Right cardiac atrium (tissue), 5 donors: ENCODE measurements at regions of chr5 and their contacts with region 1.

Region 1: DNA sequence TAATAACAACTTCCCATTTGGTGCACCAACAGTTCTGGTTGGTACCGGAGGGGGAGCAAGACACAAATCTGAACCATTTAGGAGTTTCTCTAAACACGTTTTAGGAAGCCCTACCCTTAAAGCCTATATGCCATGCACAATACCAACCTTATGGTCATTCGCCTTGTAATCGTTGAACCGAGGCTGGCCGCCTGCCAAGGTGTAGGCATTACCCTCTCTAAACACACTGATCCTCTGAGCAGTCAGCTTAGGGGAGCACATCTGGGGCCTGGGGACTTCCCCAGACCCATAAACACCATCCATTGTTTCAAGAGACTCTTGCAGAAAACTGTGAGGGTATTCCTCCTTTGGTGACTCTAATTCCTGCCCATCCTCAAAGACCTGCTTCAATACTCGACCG is 328 bp downstream of the GRXCR2 start:
- DNase-seq: peak in 2 of 3 donors; percentile 29 to 47
- ATAC-seq: no peak
- H3K4me3 ChIP-seq: no peak overlapping the region
- H3K27ac ChIP-seq: no peak overlapping the region
- H3K4me1 ChIP-seq: no peaks in the 10 kb centered on the region
- H3K27me3 ChIP-seq: no peaks in the 10 kb centered on the region

Region 2: DNA sequence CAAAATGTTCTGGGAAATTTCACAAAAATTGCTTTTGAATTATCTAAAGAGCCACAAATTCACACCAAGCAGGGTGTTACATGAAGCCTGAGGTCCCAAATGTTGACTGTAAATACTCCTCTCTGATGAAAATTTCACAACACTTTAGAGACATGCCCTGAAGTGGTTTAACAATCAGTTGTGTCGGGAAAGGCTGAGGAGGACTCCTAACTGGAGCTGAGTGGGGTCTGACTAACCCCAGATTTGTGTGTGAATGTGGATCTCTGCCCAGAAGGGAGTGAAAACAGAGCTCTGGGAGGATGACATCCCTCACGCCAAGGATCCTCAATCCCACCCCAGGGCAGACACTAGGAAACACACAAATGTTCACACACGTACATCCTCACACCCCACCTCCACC is 31.4 kb after region 1 on chr5:
- intact Hi-C with region 1: loop called in 1 of 4 experiments (anchors 2 kb)
- DNase-seq: no peak
- ATAC-seq: peak in 1 of 2 donors; percentile 34
- H3K4me3 ChIP-seq: no peak overlapping the region
- H3K27ac ChIP-seq: no peak overlapping the region
- H3K4me1 ChIP-seq: no peaks in the 10 kb centered on the region
- H3K27me3 ChIP-seq: no peaks in the 10 kb centered on the region